ENCODE measurements at regions of chr4 and their contacts with region 1.

Region 1: DNA sequence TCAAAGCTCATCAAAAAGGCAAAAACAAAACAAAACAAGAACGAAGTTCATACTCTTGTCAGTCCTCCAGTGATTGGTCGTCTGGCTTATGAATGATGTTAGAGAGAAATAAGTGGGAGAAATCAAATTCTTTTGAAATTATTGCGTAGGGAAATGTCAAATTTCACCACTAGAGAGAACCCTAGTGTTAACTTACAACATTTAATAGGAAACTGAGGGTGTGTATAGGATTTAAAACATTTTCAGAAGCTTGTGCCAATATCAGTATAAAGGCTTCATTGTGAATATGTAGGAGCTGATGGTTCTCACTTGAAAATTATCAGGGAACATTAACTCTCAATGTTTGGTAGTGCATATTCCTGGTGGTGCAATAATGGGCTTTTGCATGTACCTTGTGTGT is 17.4 kb downstream of the ADH6 start:
- DNase-seq: peak; percentile 55
- ATAC-seq: peak; percentile 68
- H3K4me3 ChIP-seq: no peak overlapping the region
- H3K27ac ChIP-seq: peak overlapping the region; percentile 23; the same call in 1 of the 2 replicates
- H3K4me1 ChIP-seq: peaks cover 12% of the 10 kb centered on the region
- H3K27me3 ChIP-seq: no peaks in the 10 kb centered on the region
- CTCF ChIP-seq: peak; percentile 59
- POLR2A ChIP-seq: no peak
- RAD21 ChIP-seq: peak; percentile 54

Region 2: GRCh38 chr4:99300934-99301333 is 99.2 kb after region 1 on chr4:
- CTCF ChIA-PET with region 1: no interaction called
- POLR2A ChIA-PET with region 1: no interaction called
- dilution Hi-C with region 1: no loop called
- in situ Hi-C with region 1: no loop called
- intact Hi-C with region 1: loop called (anchors 2 kb)
- DNase-seq: peak; percentile 97
- ATAC-seq: peak; percentile 87
- H3K4me3 ChIP-seq: no peak overlapping the region
- H3K27ac ChIP-seq: peak overlapping the region; percentile 99; the same call in 1 of the 2 replicates
- H3K4me1 ChIP-seq: peaks cover 5% of the 10 kb centered on the region
- H3K27me3 ChIP-seq: no peaks in the 10 kb centered on the region
- CTCF ChIP-seq: no peak
- POLR2A ChIP-seq: no peak
- RAD21 ChIP-seq: no peak

Measured in IMR-90 (cell line).